ENCODE measurements at regions of chr13 and their contacts with region 1.

Region 1: GRCh38 chr13:102555917-102556553 is 40.8 kb upstream of the TPP2 start:
- DNase-seq: peak in 3 of 4 experiments; percentile 8 to 32 (median 11)
- ATAC-seq: peak; percentile 74
- H3K4me3 ChIP-seq: no peak overlapping the region
- H3K27ac ChIP-seq: no peak overlapping the region
- H3K4me1 ChIP-seq: no peaks in the 10 kb centered on the region
- H3K27me3 ChIP-seq: no peaks in the 10 kb centered on the region
- CTCF ChIP-seq: peak; percentile 22 to 52 (median 43); a peak in 4 of 6 replicates
- EP300 ChIP-seq: no peak
- POLR2A ChIP-seq: no peak
- RAD21 ChIP-seq: peak; percentile 32 to 49; a peak in 3 of 4 replicates

Region 2: DNA sequence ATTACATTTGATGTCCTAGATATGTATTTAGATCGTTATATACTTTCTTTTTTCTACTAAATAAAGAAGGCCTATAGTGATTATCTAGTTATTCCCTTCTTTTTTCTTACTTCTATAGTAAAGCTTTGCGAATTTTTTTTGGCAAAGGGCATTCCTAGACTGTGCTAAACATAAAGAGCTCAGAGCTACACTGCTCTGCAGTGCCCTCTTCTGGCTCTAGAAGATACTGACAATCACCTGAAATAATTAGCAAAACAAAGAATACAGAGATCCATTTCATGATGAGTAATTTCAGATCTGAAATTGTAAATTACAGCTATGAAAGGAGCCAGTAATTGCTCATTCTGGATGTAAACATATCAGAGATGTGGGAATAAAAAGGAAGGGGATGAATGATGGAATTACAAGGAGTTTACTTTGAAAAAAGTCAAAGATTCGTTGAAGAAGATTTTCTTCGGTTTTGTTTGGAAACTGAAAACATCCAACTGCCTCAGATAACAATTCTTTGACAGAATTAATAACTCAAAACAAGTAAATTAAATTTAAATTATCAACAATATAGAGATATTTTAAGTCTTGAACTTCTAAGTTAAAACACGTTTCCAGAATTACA is 1428.2 kb before region 1 on chr13:
- CTCF ChIA-PET with region 1: no interaction called
- POLR2A ChIA-PET with region 1: no interaction called
- in situ Hi-C with region 1: loop called (anchors 25 kb)
- intact Hi-C with region 1: no loop called
- DNase-seq: peak; percentile 14 to 37 (median 24)
- ATAC-seq: peak; percentile 79
- H3K4me3 ChIP-seq: no peak overlapping the region
- H3K27ac ChIP-seq: no peak overlapping the region
- H3K4me1 ChIP-seq: no peaks in the 10 kb centered on the region
- H3K27me3 ChIP-seq: no peaks in the 10 kb centered on the region
- CTCF ChIP-seq: peak; percentile 21 to 61 (median 46); a peak in 4 of 6 replicates
- EP300 ChIP-seq: no peak
- POLR2A ChIP-seq: no peak
- RAD21 ChIP-seq: peak; percentile 44 to 63; a peak in 3 of 4 replicates

Region 3: GRCh38 chr13:101144808-101145419 is 1411.1 kb before region 1 on chr13:
- CTCF ChIA-PET with region 1: no interaction called
- POLR2A ChIA-PET with region 1: no interaction called
- in situ Hi-C with region 1: loop called (anchors 25 kb)
- intact Hi-C with region 1: loop called (anchors 5 kb)
- DNase-seq: peak; percentile 12 to 47 (median 22)
- ATAC-seq: peak; percentile 68
- H3K4me3 ChIP-seq: no peak overlapping the region
- H3K27ac ChIP-seq: no peak overlapping the region
- H3K4me1 ChIP-seq: no peaks in the 10 kb centered on the region
- H3K27me3 ChIP-seq: no peaks in the 10 kb centered on the region
- CTCF ChIP-seq: peak; percentile 24 to 64 (median 33); a peak in 3 of 6 replicates
- EP300 ChIP-seq: no peak
- POLR2A ChIP-seq: no peak
- RAD21 ChIP-seq: peak; percentile 59 to 70